Breast epithelium (tissue), 4 donors: ENCODE measurements at regions of chr19 and their contacts with region 1.

Region 1: GRCh38 chr19:45862564-45863334 is at the start of gene SYMPK:
- DNase-seq: peak; percentile 99
- H3K4me3 ChIP-seq: peak within 1 kb of the TSS; percentile 67 to 94 (median 87)
- H3K27ac ChIP-seq: peak within 1 kb of the TSS; percentile 88 to 92
- H3K4me1 ChIP-seq: no peaks in the 10 kb centered on the region
- H3K27me3 ChIP-seq: peaks cover 0 to 6% of the 10 kb centered on the region in 2 donors
- CTCF ChIP-seq: no peak
- POLR2A ChIP-seq: peak; percentile 76
- total RNA-seq, gene SYMPK: 24.3 to 50.8 (median 31.3) TPM

Region 2: DNA sequence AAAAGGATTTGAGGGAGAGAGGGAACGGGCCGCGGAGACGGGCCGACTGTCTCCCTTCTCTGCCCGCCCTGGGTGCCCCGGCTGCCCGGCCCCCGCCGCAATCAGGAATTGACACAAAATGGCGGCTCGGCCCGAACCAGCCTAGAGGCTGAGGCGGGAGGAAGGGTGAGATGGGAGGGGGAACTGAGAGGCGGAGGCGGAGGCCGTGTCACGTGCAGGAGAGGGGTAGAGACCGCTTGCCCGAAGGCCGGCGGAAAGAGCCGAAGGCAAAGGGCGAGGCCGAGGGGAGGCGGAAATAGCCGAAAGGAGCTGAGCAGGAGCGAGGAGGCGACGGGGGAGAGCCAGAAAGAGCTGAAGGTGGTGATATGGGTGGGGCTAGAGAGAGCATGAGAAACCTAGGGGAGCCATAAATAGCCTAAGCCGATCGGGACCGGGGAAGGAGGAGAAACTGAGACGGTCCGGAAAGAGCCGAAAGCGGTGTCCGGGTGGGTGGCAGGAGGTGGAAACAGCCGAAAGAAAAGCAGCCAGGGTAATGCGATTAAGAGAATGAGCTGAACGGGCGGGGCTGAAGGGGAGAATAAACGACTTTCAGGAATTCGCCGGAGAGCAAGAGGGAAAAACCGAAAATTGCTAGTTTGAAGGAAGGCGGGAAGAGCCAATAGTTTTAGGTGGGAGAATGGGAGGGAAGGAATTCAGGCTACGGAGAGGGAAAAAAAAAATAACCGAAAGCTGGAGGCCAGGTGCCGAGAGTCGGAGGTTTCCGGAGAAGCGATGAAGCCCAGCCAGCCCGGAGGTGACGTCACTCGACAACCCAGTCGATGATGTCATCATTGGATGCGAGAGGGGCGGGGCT is 1250.5 kb after region 1 on chr19 and contains the start of gene ZC3H4:
- intact Hi-C with region 1: loop called (anchors 5 kb)
- DNase-seq: peak; percentile 99 to 100
- H3K4me3 ChIP-seq: peak within 1 kb of the TSS; percentile 97 to 98 (median 97)
- H3K27ac ChIP-seq: peak within 1 kb of the TSS; percentile 100
- H3K4me1 ChIP-seq: no peaks in the 10 kb centered on the region
- H3K27me3 ChIP-seq: no peaks in the 10 kb centered on the region
- CTCF ChIP-seq: peak in 1 of 3 donors; percentile 7
- POLR2A ChIP-seq: peak; percentile 88
- total RNA-seq, gene ZC3H4: 17.7 to 23.4 (median 19.5) TPM